Activated CD8-positive, alpha-beta T cell treated with anti-CD3 and anti-CD28 coated beads for 36 hours (primary cell): ENCODE measurements at regions of chr17 and their contacts with region 1.

Region 1: GRCh38 chr17:47999582-47999981 is 28.7 kb downstream of the CDK5RAP3 start:
- DNase-seq: peak; percentile 26
- ATAC-seq: peak; percentile 80
- H3K4me3 Mint-ChIP-seq: no peak overlapping the region
- H3K27ac Mint-ChIP-seq: no peak overlapping the region
- H3K4me1 Mint-ChIP-seq: peaks cover 2% of the 10 kb centered on the region
- H3K27me3 Mint-ChIP-seq: peaks cover 8% of the 10 kb centered on the region
- CTCF ChIP-seq: no peak

Region 2: GRCh38 chr17:47978324-47978723 is 21.3 kb before region 1 on chr17:
- CTCF ChIA-PET with region 1: interaction called, 16 read pairs
- POLR2A ChIA-PET with region 1: interaction called, 4 read pairs
- intact Hi-C with region 1: no loop called
- DNase-seq: peak; percentile 68
- ATAC-seq: peak; percentile 84
- H3K4me3 Mint-ChIP-seq: no peak overlapping the region
- H3K27ac Mint-ChIP-seq: no peak overlapping the region
- H3K4me1 Mint-ChIP-seq: no peaks in the 10 kb centered on the region
- H3K27me3 Mint-ChIP-seq: no peaks in the 10 kb centered on the region
- CTCF ChIP-seq: peak; percentile 61